Ascending aorta (tissue), 2 donors: ENCODE measurements at regions of chr12 and their contacts with region 1.

Region 1: DNA sequence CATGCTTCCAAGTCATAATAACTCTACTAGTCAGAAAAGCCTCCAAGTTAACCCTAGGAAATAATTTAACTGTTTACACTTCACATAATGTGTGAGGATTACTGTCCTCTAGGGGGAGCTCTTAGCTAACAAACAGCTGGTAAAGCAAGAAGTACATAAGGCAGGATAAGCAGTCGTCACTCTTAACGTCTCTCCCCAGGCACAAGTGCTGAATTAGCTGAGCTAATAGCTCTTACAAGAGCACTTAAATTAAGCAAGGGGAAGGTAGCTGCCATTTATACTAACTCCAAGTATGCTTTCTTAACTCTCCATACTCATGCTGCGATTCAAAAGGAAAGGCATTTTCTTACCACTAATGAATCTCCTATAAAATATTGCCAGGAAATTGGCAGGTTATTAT is 79.3 kb upstream of the TSPAN11 start:
- DNase-seq: no peak
- H3K4me3 ChIP-seq: no peak overlapping the region
- H3K27ac ChIP-seq: no peak overlapping the region
- H3K4me1 ChIP-seq: no peaks in the 10 kb centered on the region
- H3K27me3 ChIP-seq: no peaks in the 10 kb centered on the region
- CTCF ChIP-seq: peak; percentile 36 to 57 (median 55)

Region 2: DNA sequence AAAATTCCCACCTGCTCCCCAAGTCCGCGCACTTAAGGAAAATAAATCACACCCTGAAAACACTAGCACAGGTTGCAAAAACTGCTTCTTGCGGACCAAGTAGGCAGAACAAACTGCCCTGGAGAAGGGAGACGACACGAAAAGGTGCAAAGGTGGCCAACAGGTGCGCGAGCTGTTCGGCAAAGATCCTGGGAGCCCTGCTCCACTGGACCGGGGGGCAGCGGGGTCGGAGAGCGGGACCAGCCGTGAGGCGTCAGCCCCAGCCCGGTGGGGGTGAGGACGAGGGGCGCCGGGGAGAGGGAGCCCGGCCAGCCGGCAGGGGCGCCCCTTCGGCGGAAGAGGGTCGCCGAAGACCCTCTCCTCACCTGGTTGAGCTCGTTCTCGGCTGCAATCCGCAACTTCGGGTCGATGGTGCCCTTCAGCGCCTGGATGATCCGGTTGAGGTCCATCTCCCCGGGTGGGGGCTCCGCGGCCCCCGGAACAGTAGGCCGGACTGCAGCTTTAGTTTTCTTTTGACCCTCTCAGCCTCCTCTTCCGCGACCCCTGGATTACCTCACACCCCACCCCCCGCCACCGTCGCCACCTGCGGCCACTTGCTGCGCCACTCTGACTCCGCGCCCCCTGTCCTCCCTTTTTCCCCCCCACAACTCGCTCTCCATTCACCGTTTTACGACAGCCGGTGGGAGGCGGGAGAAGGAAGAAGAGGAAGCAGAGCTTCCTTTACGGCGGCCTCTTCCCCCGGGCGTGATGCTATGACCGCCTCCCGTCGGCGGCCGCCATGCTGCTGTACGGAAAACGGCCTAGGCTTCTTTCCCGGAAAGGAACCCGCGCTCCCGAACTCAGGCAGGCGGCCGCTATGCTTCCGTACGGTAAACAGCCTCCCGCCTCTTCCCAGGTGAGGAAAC is 151.8 kb before region 1 on chr12 and contains the start of gene IPO8:
- intact Hi-C with region 1: no loop called
- DNase-seq: peak; percentile 77 to 95
- H3K4me3 ChIP-seq: peak within 1 kb of the TSS; percentile 81 to 95
- H3K27ac ChIP-seq: peak within 1 kb of the TSS; percentile 62 to 68
- H3K4me1 ChIP-seq: peaks cover 10 to 11% of the 10 kb centered on the region in 2 donors
- H3K27me3 ChIP-seq: no peaks in the 10 kb centered on the region
- CTCF ChIP-seq: peak in 1 of 3 experiments; percentile 20
- total RNA-seq, gene IPO8: 79.7 TPM

Region 3: DNA sequence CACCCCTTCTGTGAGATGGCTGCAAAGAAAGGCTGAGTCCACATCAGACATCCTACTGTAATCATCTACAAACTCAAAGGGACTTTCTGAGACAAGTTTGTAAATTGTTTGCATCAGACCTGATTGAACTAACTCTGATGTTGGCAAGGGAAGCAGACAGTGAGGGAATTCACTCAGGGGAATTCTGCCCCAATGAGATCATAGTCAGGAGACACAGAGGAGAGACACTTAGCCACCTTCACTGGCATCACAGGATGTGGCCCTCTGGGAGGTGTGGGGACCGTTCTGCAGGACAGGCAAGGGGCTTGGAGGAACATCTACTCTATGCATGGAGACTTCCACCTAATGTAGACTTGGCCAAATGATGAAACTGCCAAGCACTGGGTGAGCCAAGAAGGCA is 155.7 kb after region 1 on chr12:
- intact Hi-C with region 1: no loop called
- DNase-seq: no peak
- H3K4me3 ChIP-seq: no peak overlapping the region
- H3K27ac ChIP-seq: no peak overlapping the region
- H3K4me1 ChIP-seq: no peaks in the 10 kb centered on the region
- H3K27me3 ChIP-seq: no peaks in the 10 kb centered on the region
- CTCF ChIP-seq: no peak

Region 4: GRCh38 chr12:31238764-31239387 is 391.6 kb after region 1 on chr12:
- intact Hi-C with region 1: loop called (anchors 10 kb)
- DNase-seq: peak in 1 of 2 donors; percentile 71
- H3K4me3 ChIP-seq: peak overlapping the region in 1 of 2 donors; percentile 42
- H3K27ac ChIP-seq: no peak overlapping the region
- H3K4me1 ChIP-seq: no peaks in the 10 kb centered on the region
- H3K27me3 ChIP-seq: no peaks in the 10 kb centered on the region
- CTCF ChIP-seq: peak in 2 of 3 experiments; percentile 53 to 59

Region 5: GRCh38 chr12:31267966-31268365 is 420.7 kb after region 1 on chr12:
- intact Hi-C with region 1: loop called (anchors 2 kb)
- DNase-seq: no peak
- H3K4me3 ChIP-seq: no peak overlapping the region
- H3K27ac ChIP-seq: no peak overlapping the region
- H3K4me1 ChIP-seq: no peaks in the 10 kb centered on the region
- H3K27me3 ChIP-seq: no peaks in the 10 kb centered on the region
- CTCF ChIP-seq: no peak